Right ventricle myocardium superior (tissue), 1 donor: ENCODE measurements at regions of chr2 and their contacts with region 1.

Region 1: GRCh38 chr2:235135990-235136561 is 184.3 kb downstream of the SH3BP4 start:
- DNase-seq: peak; percentile 85
- ATAC-seq: peak; percentile 94

Region 2: DNA sequence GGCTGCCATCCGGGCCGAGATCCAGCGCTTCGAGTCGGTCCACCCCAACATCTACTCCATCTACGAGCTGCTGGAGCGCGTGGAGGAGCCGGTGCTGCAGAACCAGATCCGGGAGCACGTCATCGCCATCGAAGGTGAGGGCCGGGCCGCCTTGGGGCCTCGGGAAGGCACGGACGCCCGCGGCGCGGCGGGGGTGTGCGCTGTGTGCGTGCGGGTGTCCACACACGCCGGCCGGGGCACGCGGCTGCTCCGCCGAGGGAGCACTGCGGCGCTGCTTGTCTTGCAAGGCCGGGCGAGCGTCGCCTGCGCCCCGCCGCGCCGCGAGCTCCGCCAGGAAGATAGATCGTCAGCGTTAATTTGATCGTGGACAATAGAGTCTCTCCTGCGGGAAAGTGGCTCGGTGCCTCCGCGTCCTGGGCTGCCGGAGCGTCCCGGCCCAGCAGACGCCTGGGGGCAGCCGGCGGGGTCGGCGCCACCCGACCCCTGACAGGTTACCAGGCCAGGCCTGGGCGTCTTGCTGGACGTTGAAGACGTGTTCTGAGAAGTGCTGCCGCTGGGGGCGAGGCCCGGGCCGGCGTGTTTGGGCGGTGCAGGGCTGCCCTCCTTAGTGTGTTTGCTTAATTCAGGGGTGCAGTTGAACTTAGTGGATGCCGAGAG is 358.8 kb after region 1 on chr2:
- intact Hi-C with region 1: loop called (anchors 5 kb)
- DNase-seq: peak; percentile 66
- ATAC-seq: peak; percentile 28